K562 (cell line): ENCODE measurements at regions of chr11 and their contacts with region 1.

Region 1: GRCh38 chr11:73242251-73243079 is 24.4 kb downstream of the P2RY2 start:
- DNase-seq: peak; percentile 78 to 83 (median 79)
- ATAC-seq: peak; percentile 96
- H3K4me3 ChIP-seq: peak overlapping the region; percentile 21; the same call in 1 of the 2 replicates
- H3K27ac ChIP-seq: no peak overlapping the region; the same call in 2 of the 3 replicates
- H3K4me1 ChIP-seq: peaks cover 0 to 3% of the 10 kb centered on the region in 2 experiments; a peak in 1 of 5 replicates
- H3K27me3 ChIP-seq: peaks cover 0 to 28% of the 10 kb centered on the region in 2 experiments; a peak in 4 of 5 replicates
- CTCF ChIP-seq: peak; percentile 83 to 89 (median 88)
- EP300 ChIP-seq: no peak
- POLR2A ChIP-seq: no peak
- RAD21 ChIP-seq: peak; percentile 68 to 81

Region 2: DNA sequence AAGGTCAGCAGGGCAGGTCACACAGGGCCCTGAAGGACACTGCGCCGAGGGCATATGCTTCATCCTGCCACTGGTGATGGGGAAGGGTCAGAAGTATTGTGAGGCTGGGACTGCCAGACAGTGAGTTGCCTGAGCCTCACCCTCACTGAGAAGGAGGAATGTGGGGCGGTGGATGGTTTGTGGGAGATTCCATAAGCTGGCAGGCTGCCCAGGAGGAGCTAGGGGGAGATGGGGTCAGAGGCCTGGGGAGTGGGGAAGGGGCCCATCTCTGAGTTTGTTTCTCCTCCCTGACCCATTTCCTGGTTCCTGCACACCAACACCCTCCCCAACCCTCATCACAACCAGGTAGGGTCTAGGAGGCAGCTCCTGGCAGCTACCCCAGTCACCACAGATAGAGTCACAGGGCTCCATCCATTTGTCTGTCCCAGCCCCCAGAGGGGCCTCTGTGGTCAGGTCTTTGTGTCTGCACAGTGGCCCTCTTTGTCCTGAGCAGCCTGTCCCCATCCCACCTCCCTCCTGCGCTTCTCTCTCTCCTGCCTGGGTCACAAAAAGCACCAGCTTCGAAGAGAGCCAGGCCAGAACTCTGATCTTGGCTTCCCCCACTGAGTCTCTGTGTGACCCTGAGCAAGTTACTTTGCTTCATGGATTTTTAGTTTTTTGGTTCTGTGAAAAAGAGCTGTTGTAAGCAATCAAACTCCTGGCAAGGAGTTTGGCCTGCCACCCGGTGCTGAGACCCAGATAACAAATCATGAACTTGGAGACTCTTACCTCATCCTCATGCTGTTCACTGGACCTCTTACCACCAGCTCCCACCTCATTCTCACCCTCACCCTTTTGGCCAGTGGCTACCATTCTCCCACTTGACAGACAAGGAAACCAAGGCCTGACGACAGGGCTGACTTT is 29.0 kb before region 1 on chr11:
- CTCF ChIA-PET with region 1: no interaction called
- POLR2A ChIA-PET with region 1: no interaction called
- in situ Hi-C with region 1: no loop called
- intact Hi-C with region 1: no loop called
- DNase-seq: no peak
- ATAC-seq: no peak; the same call in 2 of the 3 replicates
- H3K4me3 ChIP-seq: no peak overlapping the region
- H3K27ac ChIP-seq: no peak overlapping the region
- H3K4me1 ChIP-seq: peaks cover 5 to 17% of the 10 kb centered on the region in 2 experiments; a peak in 4 of 5 replicates
- H3K27me3 ChIP-seq: no peaks in the 10 kb centered on the region
- CTCF ChIP-seq: no peak
- EP300 ChIP-seq: no peak
- POLR2A ChIP-seq: no peak
- RAD21 ChIP-seq: no peak

Region 3: DNA sequence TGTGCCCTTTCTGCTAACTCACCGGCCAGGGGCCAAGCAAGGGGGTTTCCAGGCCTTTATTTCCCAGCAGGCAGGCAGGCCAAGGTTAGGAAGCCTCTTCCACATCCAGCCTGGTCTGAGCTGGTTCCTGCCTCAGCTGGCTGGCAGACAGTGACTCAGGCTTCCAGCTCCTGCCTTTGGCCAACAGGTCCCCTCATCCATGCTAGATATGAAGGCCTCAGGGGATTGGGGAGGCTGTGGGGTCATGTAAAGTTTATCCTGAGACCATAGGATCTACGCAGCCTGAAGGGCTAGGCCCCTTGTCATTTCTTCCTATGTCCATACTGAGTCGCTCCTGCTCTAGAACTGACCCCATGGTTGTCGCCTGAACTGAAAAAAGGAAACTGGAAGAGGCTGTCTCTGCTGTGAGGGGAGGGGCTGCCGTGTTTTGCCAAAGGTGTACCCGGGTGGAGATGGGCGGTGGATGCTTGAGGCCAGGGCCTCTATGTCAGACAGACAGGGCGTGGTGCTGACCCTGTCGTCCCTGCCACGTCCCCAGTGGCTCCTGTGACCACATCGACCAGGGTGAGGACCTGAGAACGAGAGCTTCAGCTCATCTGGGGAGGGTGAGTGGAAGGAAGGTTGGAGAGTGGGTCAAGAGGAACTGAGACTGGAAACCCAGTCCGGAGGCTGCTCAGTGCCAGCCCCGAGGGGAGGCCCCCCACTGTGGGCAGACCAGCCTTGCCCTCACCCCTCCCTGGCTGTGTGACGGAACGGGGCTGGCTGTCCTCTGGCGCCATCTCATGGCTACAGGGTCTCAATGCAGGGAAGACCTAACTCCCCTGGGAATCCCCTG is 46.6 kb after region 1 on chr11:
- CTCF ChIA-PET with region 1: no interaction called
- POLR2A ChIA-PET with region 1: interaction called, 3 read pairs
- in situ Hi-C with region 1: no loop called
- intact Hi-C with region 1: loop called (anchors 1 kb)
- DNase-seq: peak; percentile 80 to 92 (median 90)
- ATAC-seq: peak; percentile 85
- H3K4me3 ChIP-seq: no peak overlapping the region
- H3K27ac ChIP-seq: peak overlapping the region; percentile 44
- H3K4me1 ChIP-seq: peaks cover 19 to 20% of the 10 kb centered on the region in 2 experiments; a peak in 4 of 5 replicates
- H3K27me3 ChIP-seq: peaks cover 0 to 4% of the 10 kb centered on the region in 2 experiments; a peak in 1 of 5 replicates
- CTCF ChIP-seq: peak; percentile 92 to 93 (median 92)
- EP300 ChIP-seq: no peak
- POLR2A ChIP-seq: no peak
- RAD21 ChIP-seq: peak; percentile 79 to 90